ENCODE measurements at regions of chr16 and their contacts with region 1.

Region 1: GRCh38 chr16:74709441-74709877 is 8.8 kb upstream of the MLKL start:
- DNase-seq: peak; percentile 69
- ATAC-seq: peak; percentile 98
- H3K4me3 Mint-ChIP-seq: no peak overlapping the region
- H3K27ac Mint-ChIP-seq: no peak overlapping the region
- H3K4me1 Mint-ChIP-seq: peaks cover 3% of the 10 kb centered on the region
- H3K27me3 Mint-ChIP-seq: no peaks in the 10 kb centered on the region
- CTCF ChIP-seq: peak; percentile 88

Region 2: GRCh38 chr16:74626741-74627416 is 82.6 kb before region 1 on chr16:
- CTCF ChIA-PET with region 1: no interaction called
- POLR2A ChIA-PET with region 1: no interaction called
- intact Hi-C with region 1: no loop called
- DNase-seq: no peak
- ATAC-seq: peak; percentile 5
- H3K4me3 Mint-ChIP-seq: no peak overlapping the region
- H3K27ac Mint-ChIP-seq: peak overlapping the region; percentile 70
- H3K4me1 Mint-ChIP-seq: peaks cover 8% of the 10 kb centered on the region
- H3K27me3 Mint-ChIP-seq: no peaks in the 10 kb centered on the region
- CTCF ChIP-seq: no peak

Region 3: GRCh38 chr16:74813109-74813641 is 103.7 kb after region 1 on chr16:
- CTCF ChIA-PET with region 1: interaction called, 3 read pairs
- POLR2A ChIA-PET with region 1: no interaction called
- intact Hi-C with region 1: loop called (anchors 1 kb)
- DNase-seq: peak; percentile 59
- ATAC-seq: peak; percentile 96
- H3K4me3 Mint-ChIP-seq: no peak overlapping the region
- H3K27ac Mint-ChIP-seq: no peak overlapping the region
- H3K4me1 Mint-ChIP-seq: no peaks in the 10 kb centered on the region
- H3K27me3 Mint-ChIP-seq: peaks cover 13% of the 10 kb centered on the region
- CTCF ChIP-seq: peak; percentile 78

Region 4: GRCh38 chr16:75385507-75386152 is 676.2 kb after region 1 on chr16:
- CTCF ChIA-PET with region 1: no interaction called
- POLR2A ChIA-PET with region 1: no interaction called
- intact Hi-C with region 1: loop called (anchors 10 kb)
- DNase-seq: no peak
- ATAC-seq: peak; percentile 37
- H3K4me3 Mint-ChIP-seq: no peak overlapping the region
- H3K27ac Mint-ChIP-seq: no peak overlapping the region
- H3K4me1 Mint-ChIP-seq: peaks cover 9% of the 10 kb centered on the region
- H3K27me3 Mint-ChIP-seq: peaks cover 31% of the 10 kb centered on the region
- CTCF ChIP-seq: peak; percentile 51